ENCODE measurements at regions of chr5 and their contacts with region 1.

Region 1: DNA sequence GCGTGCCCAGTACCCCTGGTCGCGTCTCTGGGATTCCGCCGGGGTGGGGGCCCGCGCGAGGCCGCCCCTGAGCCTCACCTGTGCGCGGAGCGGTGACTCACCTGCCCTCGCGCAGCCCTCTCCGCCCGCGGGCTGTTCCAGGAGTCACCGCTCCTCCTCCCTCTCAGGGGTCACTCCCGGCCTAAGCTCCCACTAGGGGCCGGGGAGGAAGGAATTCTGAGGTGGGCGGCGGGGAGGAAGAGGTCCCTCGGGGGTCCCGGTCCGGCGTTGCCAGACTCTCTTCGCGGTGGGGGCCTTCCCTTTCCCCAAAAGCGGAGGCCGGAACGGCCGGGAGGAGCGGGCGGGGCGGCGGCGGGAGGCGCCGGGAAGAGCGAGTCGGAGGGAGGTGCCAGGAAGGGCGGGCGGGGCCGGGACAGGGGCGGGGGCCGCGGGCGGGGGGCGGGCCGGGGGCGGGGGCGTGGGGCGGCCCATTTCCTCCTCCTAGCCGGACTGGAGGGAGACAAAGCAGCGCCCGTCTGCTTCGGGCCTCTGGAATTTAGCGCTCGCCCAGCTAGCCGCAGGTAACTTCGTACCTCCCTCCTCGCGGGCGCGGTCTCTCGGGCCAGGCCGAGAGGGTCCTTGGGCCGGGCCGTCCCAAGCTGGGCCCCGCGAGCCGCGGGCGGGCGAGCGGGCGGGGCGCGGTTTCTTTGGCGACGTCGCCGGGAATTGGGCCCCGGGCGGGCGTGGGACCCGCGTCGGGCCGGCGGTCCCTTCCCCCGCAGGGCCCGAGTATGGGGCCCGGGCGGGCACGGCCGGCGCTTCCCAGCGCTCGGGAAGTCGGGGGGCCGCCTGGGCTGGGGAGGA is at the start of gene CTNNA1:
- DNase-seq: peak; percentile 19 to 92 (median 58)

Region 2: GRCh38 chr5:138663009-138663408 is 90.2 kb before region 1 on chr5:
- intact Hi-C with region 1: loop called (anchors 10 kb)
- DNase-seq: peak in 1 of 10 donors; percentile 32

Region 3: GRCh38 chr5:138953387-138954256 is 200.4 kb after region 1 on chr5:
- intact Hi-C with region 1: loop called (anchors 10 kb)
- DNase-seq: peak; percentile 80 to 99 (median 92)

Measured in posterior cingulate gyrus (tissue), 11 donors.